PC-9 (cell line): ENCODE measurements at regions of chr12 and their contacts with region 1.

Region 1: DNA sequence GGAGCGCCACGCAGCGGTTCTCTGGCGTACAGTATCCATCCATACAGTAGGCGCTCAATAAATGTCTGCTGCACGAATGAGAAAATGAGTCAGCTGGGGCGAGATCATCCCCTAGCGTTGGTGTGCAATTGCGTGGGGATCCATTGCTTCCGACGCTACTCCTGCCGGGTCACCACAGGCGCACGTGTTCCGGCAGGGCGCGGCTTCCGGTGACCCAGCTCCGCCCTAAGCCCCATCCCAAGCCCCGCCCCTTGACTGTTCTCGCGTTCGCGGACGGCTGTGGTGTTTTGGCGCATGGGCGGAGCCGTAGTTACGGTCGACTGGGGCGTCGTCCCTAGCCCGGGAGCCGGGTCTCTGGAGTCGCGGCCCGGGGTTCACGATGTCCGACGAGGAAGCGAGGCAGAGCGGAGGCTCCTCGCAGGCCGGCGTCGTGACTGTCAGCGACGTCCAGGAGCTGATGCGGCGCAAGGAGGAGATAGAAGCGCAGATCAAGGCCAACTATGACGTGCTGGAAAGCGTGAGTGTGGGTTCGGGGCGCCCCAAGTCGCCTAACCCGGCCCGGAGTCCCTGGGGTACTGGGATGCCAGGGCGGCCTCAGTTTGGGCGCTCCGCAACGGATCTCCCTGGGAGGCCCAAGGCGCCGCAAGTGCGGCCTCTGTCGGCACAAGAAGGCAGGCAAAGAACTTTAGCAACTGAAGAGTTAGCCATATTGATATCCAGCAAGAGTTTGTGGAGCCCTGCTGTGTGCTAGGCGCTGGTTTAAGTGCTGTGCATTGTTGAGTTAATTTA is at the start of gene PSMD9:
- DNase-seq: peak; percentile 89 to 98
- H3K4me3 ChIP-seq: peak within 1 kb of the TSS; percentile 73
- H3K27ac ChIP-seq: peak within 1 kb of the TSS; percentile 72
- H3K4me1 ChIP-seq: peaks cover 26% of the 10 kb centered on the region
- H3K27me3 ChIP-seq: no peaks in the 10 kb centered on the region
- CTCF ChIP-seq: peak; percentile 63
- total RNA-seq, gene PSMD9: 64.8 and 76.6 TPM in 2 replicates

Region 2: GRCh38 chr12:121620328-121620891 is 268.3 kb before region 1 on chr12:
- CTCF ChIA-PET with region 1: interaction called, 12 read pairs
- POLR2A ChIA-PET with region 1: no interaction called
- intact Hi-C with region 1: no loop called
- DNase-seq: no peak
- H3K4me3 ChIP-seq: no peak overlapping the region
- H3K27ac ChIP-seq: no peak overlapping the region
- H3K4me1 ChIP-seq: no peaks in the 10 kb centered on the region
- H3K27me3 ChIP-seq: no peaks in the 10 kb centered on the region
- CTCF ChIP-seq: no peak

Region 3: DNA sequence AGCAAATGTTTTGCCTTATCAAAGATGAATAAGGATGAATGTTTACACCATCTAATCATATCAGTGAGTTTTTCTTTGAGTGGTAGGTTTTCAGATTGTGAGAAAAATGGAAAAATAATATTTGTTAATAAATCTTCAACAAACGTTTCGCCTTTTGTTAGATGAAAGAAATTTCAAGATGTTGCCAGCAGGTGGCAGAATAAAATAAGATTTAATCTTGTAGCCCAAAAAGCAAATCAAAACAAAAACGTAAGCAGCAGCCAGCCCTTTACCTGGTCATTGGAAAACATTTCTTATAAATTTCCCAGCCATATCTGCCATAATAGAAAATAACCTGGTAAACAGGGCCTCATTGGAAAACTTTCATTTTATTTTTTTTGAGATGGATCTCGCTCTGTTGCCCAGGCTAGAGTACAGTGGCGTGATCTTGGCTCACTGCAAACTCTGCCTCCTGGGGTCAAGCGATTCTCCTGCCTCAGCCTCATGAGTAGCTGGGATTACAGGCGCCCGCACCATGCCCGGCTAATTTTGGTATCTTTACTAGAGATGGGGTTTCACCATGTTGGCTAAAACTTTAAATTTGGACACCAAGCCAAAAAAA is 191.5 kb before region 1 on chr12:
- CTCF ChIA-PET with region 1: no interaction called
- POLR2A ChIA-PET with region 1: interaction called, 7 read pairs
- intact Hi-C with region 1: loop called (anchors 2 kb)
- DNase-seq: peak in 1 of 2 experiments; percentile 13
- H3K4me3 ChIP-seq: no peak overlapping the region
- H3K27ac ChIP-seq: no peak overlapping the region
- H3K4me1 ChIP-seq: no peaks in the 10 kb centered on the region; the same call in 1 of the 2 replicates
- H3K27me3 ChIP-seq: no peaks in the 10 kb centered on the region
- CTCF ChIP-seq: peak; percentile 70

Region 4: DNA sequence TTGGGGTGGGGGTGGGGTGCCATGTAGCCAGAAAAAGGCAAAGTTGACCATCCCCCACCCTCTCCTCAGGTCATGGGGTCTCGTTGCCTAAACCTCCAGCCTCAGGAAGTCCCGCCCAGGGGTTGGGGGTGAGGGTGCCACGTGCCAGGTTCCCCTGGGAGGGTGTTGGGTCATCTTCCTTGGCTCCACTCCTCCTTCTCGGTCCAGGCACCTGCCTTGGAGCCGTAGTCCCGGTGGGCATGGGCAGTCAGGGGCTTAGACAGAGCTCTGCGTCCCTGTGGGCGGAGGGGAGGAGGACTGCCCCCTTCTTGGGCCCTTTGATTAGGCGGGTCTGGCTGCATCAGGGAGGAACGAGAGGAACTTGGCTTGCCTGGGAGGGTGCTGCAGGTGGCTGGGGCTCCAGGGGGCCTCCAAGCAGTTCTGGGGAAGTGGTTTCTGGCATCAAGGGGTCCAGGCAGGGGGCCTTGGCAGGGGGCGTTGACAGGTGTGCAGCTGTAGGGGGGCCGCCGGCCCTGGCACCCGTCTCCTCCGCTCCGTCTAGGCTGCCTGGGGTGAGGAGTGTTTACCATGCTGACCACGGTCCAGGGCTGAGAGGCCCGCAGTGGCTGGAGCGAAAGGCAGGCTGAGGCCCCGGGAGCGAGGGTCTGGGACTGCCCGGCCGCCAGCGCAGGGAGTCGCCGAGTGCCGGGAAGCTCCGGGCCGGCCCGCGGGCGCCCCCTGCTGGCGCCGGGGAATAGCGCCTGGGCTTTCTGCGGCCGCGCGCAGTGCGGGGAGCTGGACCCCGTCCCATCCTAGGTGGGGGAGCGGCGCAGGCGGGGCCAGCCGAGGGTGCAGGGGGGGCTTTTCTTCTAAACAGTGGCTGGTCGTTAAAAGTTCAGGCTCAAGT is 77.0 kb before region 1 on chr12:
- CTCF ChIA-PET with region 1: interaction called, 6 read pairs
- POLR2A ChIA-PET with region 1: no interaction called
- intact Hi-C with region 1: loop called (anchors 1 kb)
- DNase-seq: peak in 1 of 2 experiments; percentile 80
- H3K4me3 ChIP-seq: peak overlapping the region; percentile 65
- H3K27ac ChIP-seq: 0 out of 2 replicates have a peak overlapping the region, but pooled peaks have one; percentile 37
- H3K4me1 ChIP-seq: peaks cover 16% of the 10 kb centered on the region
- H3K27me3 ChIP-seq: no peaks in the 10 kb centered on the region
- CTCF ChIP-seq: peak; percentile 92

Region 5: DNA sequence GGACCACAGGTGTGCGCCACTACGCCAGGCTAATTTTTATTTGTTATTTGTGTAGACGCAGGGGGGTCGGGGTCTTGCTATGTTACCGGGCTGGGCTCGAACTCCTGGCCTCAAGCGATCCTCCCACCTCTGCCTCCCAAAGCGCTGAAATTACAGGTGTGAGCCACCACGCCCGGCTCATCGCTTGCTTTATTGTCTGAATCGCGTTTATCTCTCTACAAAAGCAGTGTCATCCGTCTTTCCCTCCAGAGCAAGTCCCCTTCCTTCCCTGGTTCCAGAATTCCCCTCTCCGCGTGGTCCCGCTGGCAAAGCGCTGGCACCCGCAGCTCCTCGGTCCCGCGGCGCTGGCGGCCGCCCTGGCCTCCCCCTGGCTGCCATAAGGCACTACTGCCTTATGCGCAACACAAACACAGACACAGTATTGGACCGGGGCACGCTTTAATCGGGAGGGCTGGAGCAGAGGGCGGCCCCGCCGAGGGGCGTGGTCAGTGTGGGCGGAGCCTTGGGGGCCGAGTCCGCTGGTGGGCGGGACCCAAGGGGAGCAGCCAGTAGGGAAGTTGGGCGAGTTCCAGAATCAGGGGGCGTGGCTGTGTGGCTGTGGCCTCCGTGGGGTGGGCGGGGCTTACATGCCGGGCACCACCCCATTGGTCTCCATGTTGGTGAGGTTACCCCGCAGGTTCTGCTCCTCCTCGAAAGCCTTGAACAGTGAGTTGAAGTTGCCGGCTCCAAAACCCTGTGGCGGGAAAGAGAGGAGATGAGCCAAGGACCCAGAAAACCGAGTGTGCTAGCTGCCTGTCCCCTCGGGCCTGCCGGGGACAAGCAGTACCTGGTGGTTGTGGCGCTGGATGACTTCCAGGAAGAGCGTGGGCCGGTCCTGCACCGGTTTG is 49.3 kb before region 1 on chr12:
- CTCF ChIA-PET with region 1: interaction called, 3 read pairs
- POLR2A ChIA-PET with region 1: no interaction called
- intact Hi-C with region 1: loop called (anchors 1 kb)
- DNase-seq: peak; percentile 91 to 100
- H3K4me3 ChIP-seq: peak overlapping the region; percentile 60
- H3K27ac ChIP-seq: no peak overlapping the region
- H3K4me1 ChIP-seq: no peaks in the 10 kb centered on the region; the same call in 1 of the 2 replicates
- H3K27me3 ChIP-seq: no peaks in the 10 kb centered on the region
- CTCF ChIP-seq: no peak; the same call in 1 of the 2 replicates